ENCODE measurements at regions of chr9 and their contacts with region 1.

Region 1: GRCh38 chr9:83199243-83199642 is 136.3 kb upstream of the RASEF start:
- DNase-seq: peak in 5 of 6 donors; percentile 30 to 69 (median 40)
- ATAC-seq: peak; percentile 94 to 99 (median 98)
- H3K4me3 ChIP-seq: no peak overlapping the region
- H3K27ac ChIP-seq: no peak overlapping the region
- H3K4me1 ChIP-seq: no peaks in the 10 kb centered on the region
- H3K27me3 ChIP-seq: no peaks in the 10 kb centered on the region
- CTCF ChIP-seq: peak in 3 of 4 donors; percentile 30 to 53 (median 43)

Region 2: GRCh38 chr9:83322438-83322837 is 123.2 kb after region 1 on chr9:
- intact Hi-C with region 1: no loop called
- DNase-seq: no peak
- ATAC-seq: no peak
- H3K4me3 ChIP-seq: no peak overlapping the region
- H3K27ac ChIP-seq: no peak overlapping the region
- H3K4me1 ChIP-seq: peaks cover 4 to 12% (median 8%) of the 10 kb centered on the region in 3 donors
- H3K27me3 ChIP-seq: no peaks in the 10 kb centered on the region
- CTCF ChIP-seq: no peak

Region 3: GRCh38 chr9:83554278-83554677 is 355.0 kb after region 1 on chr9:
- intact Hi-C with region 1: loop called in 1 of 3 experiments (anchors 10 kb)
- DNase-seq: peak in 1 of 6 donors; percentile 16
- ATAC-seq: peak in 1 of 4 donors; percentile 39
- H3K4me3 ChIP-seq: no peak overlapping the region
- H3K27ac ChIP-seq: no peak overlapping the region
- H3K4me1 ChIP-seq: no peaks in the 10 kb centered on the region
- H3K27me3 ChIP-seq: no peaks in the 10 kb centered on the region
- CTCF ChIP-seq: no peak

Measured in pancreas (tissue), 10 donors.